ENCODE measurements at regions of chr14 and their contacts with region 1.

Region 1: DNA sequence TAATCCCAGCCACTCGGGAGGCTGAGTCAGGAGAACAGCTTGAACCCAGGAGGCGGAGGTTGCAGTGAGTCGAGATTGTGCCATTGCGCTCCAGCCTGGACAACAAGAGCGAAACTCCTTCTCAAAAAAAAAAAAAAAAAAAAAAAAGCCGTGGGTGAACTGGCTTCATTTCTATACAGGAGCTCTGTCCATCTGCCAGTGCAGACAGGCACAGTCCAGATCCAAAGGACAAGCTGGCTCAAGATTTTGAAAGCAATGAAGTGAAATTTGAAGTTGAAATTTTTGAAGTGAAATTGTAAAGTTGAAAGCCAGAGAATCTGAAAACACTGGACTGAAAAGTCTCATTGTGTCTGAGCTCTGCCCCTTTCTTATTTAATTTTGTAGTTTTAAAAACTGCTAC is 134.7 kb downstream of the CALM1 start:
- DNase-seq: no peak
- ATAC-seq: no peak
- H3K4me3 ChIP-seq: no peak overlapping the region
- H3K27ac ChIP-seq: no peak overlapping the region
- H3K4me1 ChIP-seq: no peaks in the 10 kb centered on the region
- H3K27me3 ChIP-seq: no peaks in the 10 kb centered on the region
- CTCF ChIP-seq: no peak

Region 2: DNA sequence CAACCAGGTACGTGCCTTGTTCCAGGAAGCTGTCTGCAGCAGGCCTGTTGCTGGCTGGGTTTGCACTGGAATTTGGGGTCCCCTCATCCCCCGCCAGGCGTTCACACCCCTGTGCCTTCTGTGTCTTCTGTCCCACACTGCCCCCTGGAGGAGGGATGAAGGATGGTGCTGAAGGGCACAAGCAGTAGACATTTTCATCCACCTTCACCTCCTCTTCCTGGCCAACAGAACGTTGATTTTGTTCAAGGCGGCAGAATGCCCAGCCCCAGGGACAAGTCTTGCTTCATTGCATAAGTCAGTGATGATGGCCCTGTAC is 12.6 kb before region 1 on chr14:
- CTCF ChIA-PET with region 1: interaction called, 17 read pairs
- POLR2A ChIA-PET with region 1: no interaction called
- in situ Hi-C with region 1: no loop called
- intact Hi-C with region 1: no loop called
- DNase-seq: no peak
- ATAC-seq: no peak
- H3K4me3 ChIP-seq: no peak overlapping the region
- H3K27ac ChIP-seq: no peak overlapping the region
- H3K4me1 ChIP-seq: peaks cover 3% of the 10 kb centered on the region
- H3K27me3 ChIP-seq: no peaks in the 10 kb centered on the region
- CTCF ChIP-seq: peak; percentile 64

Measured in Panc1 (cell line).